ENCODE measurements at regions of chr14 and their contacts with region 1.

Region 1: GRCh38 chr14:105065280-105066228 is at the start of gene GPR132:
- DNase-seq: peak; percentile 81 to 99 (median 86)
- ATAC-seq: peak; percentile 87
- H3K4me3 ChIP-seq: peak within 1 kb of the TSS; percentile 82
- H3K4me3 Mint-ChIP-seq: peak within 1 kb of the TSS; percentile 100
- H3K27ac ChIP-seq: peak within 1 kb of the TSS; percentile 94 to 95
- H3K27ac Mint-ChIP-seq: peak within 1 kb of the TSS; percentile 91
- H3K4me1 ChIP-seq: peaks cover 98% of the 10 kb centered on the region
- H3K4me1 Mint-ChIP-seq: peaks cover 72% of the 10 kb centered on the region
- H3K27me3 ChIP-seq: no peaks in the 10 kb centered on the region
- H3K27me3 Mint-ChIP-seq: no peaks in the 10 kb centered on the region
- CTCF ChIP-seq: no peak
- total RNA-seq, gene GPR132: 64.4 to 66.7 TPM

Region 2: DNA sequence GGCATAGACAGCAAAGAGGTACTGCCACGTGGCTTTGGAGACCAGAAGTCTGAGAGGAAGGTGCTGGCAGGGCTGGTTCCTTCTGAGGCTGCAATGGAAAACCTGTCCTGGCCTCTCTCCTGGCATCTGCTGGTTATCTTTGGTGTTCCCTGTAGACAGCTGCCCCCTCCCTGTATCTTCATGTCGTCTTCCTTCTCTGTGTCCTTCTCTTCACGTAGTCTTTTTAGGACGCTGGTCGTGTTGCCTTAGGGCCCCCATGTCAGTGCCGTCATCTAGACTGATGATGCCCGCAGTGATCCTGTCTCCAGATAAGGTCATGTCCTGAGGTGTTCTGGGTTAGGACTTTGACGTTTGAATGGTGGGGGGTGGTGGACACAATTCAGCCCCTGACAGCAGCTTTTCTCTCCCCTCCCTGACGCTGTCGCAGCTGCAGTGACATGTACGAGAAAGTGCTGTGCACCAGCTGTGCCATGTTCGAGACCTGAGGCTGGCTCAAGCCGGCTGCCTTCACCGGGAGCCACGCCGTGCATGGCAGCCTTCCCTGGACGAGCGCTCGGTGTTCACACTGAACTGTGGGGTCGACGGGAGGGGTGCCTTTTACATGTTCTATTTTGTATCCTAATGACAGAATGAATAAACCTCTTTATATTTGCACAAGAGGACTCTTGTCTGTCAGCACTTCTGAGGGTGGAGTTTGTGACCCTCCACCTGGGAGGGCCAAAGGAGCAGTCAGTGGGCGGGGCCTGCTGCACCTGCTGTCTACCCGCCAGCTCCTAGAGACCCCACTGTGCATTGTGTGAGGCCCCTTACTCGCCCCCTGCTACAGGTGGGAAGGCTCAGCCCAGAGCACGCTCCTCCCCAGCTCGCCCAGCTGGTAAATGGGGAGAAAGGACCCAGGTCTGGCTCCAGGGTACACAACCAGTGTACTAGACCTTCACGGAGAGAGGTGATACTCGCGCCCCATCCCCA is 306.3 kb before region 1 on chr14:
- CTCF ChIA-PET with region 1: no interaction called
- POLR2A ChIA-PET with region 1: no interaction called
- intact Hi-C with region 1: no loop called
- DNase-seq: no peak
- ATAC-seq: no peak
- H3K4me3 ChIP-seq: no peak overlapping the region
- H3K4me3 Mint-ChIP-seq: no peak overlapping the region
- H3K27ac ChIP-seq: no peak overlapping the region
- H3K27ac Mint-ChIP-seq: peak overlapping the region; percentile 14
- H3K4me1 ChIP-seq: peaks cover 22% of the 10 kb centered on the region
- H3K4me1 Mint-ChIP-seq: peaks cover 20% of the 10 kb centered on the region
- H3K27me3 ChIP-seq: no peaks in the 10 kb centered on the region
- H3K27me3 Mint-ChIP-seq: no peaks in the 10 kb centered on the region
- CTCF ChIP-seq: no peak

Region 3: GRCh38 chr14:104985675-104986525 is 79.7 kb before region 1 on chr14 and contains the start of gene CLBA1:
- CTCF ChIA-PET with region 1: no interaction called
- POLR2A ChIA-PET with region 1: interaction called, 15 read pairs
- intact Hi-C with region 1: no loop called
- DNase-seq: peak; percentile 73 to 97 (median 86)
- ATAC-seq: peak; percentile 96
- H3K4me3 ChIP-seq: peak within 1 kb of the TSS; percentile 56
- H3K4me3 Mint-ChIP-seq: peak within 1 kb of the TSS; percentile 75
- H3K27ac ChIP-seq: no peak within 1 kb of the TSS
- H3K27ac Mint-ChIP-seq: peak within 1 kb of the TSS; percentile 80
- H3K4me1 ChIP-seq: peaks cover 16% of the 10 kb centered on the region
- H3K4me1 Mint-ChIP-seq: no peaks in the 10 kb centered on the region
- H3K27me3 ChIP-seq: no peaks in the 10 kb centered on the region
- H3K27me3 Mint-ChIP-seq: no peaks in the 10 kb centered on the region
- CTCF ChIP-seq: no peak
- total RNA-seq, gene CLBA1: 1.7 to 1.8 TPM

Region 4: DNA sequence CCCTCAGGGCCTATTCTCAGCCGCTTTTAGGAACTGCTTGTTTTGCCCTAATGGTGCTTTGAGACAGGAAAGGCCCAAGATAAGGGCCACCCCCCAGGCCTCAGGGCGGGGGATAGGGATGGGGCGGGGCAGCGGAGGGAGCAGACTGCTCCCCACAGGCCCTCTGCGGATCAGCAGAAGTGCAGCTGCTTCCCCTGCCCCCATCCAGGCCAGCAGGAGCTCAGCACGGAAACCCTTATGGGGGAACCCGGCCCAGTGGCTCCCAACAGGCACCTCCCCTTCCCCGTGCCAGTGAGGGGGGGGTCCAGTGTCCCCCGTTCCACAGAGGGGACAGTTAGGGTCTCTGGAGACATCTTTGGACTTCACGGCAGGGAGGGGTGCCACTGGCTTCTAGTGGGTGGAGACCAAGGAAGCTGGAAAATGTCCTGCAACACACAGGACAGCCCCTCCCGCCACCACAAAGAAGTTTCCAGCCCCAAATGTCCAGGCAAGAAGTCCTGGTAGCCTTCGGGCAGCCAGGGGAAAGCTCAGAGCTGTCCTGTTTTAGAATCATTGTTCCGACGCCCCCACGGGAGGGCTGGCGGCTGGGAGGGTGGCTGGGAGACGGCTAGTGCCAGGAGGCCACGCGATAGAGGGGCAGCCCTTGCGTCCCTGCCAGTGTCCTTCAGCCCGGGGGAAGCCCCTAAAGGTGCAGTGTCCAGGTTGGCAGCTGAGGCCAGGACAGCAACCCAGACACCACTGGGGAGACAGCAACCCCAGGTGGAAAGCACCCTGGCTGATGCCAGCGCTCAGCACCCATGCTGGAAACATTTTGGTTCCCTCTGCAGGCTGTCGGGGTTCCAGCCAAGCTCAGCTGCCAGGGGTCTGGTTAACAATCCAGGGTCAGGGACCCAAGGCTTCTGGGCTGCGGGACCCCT is 10.1 kb after region 1 on chr14:
- CTCF ChIA-PET with region 1: no interaction called
- POLR2A ChIA-PET with region 1: interaction called, 62 read pairs
- intact Hi-C with region 1: no loop called
- DNase-seq: peak in 5 of 14 experiments; percentile 42 to 59 (median 46)
- ATAC-seq: peak; percentile 64
- H3K4me3 ChIP-seq: no peak overlapping the region
- H3K4me3 Mint-ChIP-seq: no peak overlapping the region
- H3K27ac ChIP-seq: no peak overlapping the region
- H3K27ac Mint-ChIP-seq: no peak overlapping the region
- H3K4me1 ChIP-seq: peaks cover 42% of the 10 kb centered on the region
- H3K4me1 Mint-ChIP-seq: peaks cover 34% of the 10 kb centered on the region
- H3K27me3 ChIP-seq: no peaks in the 10 kb centered on the region
- H3K27me3 Mint-ChIP-seq: no peaks in the 10 kb centered on the region
- CTCF ChIP-seq: no peak